Endothelial cell of umbilical vein (primary cell): ENCODE measurements at regions of chr14 and their contacts with region 1.

Region 1: GRCh38 chr14:58082491-58083098 is 69.4 kb downstream of the ARMH4 start:
- DNase-seq: peak; percentile 81
- H3K4me3 ChIP-seq: no peak overlapping the region
- H3K27ac ChIP-seq: peak overlapping the region; percentile 86
- H3K4me1 ChIP-seq: peaks cover 13% of the 10 kb centered on the region
- H3K27me3 ChIP-seq: peaks cover 3 to 13% of the 10 kb centered on the region in 2 experiments
- CTCF ChIP-seq: no peak
- POLR2A ChIP-seq: no peak

Region 2: DNA sequence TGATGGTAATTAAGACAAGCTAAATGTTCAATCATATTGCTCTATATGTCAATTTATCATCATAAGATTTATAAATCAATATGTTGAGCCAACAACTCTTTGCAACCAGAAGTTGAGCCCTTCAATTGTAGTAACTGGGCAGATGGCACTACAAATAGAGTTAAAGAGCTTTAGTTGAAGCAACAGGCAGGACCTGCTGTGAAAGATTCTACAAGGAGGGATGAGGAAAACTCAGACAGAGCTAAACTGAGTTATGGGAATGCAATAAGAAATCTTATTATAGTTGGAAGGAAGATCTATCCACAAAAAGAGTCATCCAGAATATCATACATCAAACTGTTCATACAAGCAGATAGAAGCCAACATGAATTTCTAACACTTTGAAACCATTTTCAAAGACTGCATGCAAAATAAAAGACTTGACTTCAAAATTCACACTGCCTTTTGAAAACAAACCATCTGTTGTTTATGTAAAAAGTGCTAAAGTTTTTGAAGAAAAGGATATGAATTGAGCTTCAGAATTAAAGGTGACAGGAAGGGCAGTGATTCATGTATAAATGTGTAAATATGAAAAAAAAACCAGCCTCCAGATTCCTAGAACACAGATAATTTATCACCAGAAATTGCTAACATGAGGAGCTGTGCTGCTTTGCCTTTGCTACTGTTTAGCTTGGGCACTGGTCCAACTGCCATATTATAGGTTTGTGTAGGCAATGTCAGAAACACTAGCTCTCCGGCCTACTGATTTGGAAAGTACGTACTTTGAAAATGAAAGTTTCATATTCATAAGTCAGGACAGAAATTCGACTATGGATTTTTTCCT is 349.9 kb before region 1 on chr14:
- CTCF ChIA-PET with region 1: no interaction called
- POLR2A ChIA-PET with region 1: no interaction called
- dilution Hi-C with region 1: no loop called
- intact Hi-C with region 1: loop called (anchors 5 kb)
- DNase-seq: peak; percentile 81
- H3K4me3 ChIP-seq: no peak overlapping the region
- H3K27ac ChIP-seq: peak overlapping the region; percentile 12
- H3K4me1 ChIP-seq: peaks cover 20% of the 10 kb centered on the region
- H3K27me3 ChIP-seq: no peaks in the 10 kb centered on the region
- CTCF ChIP-seq: no peak
- POLR2A ChIP-seq: no peak

Region 3: GRCh38 chr14:58098507-58098906 is 15.9 kb after region 1 on chr14:
- CTCF ChIA-PET with region 1: interaction called, 3 read pairs
- POLR2A ChIA-PET with region 1: no interaction called
- dilution Hi-C with region 1: no loop called
- intact Hi-C with region 1: loop called (anchors 2 kb)
- DNase-seq: peak; percentile 22
- H3K4me3 ChIP-seq: no peak overlapping the region
- H3K27ac ChIP-seq: peak overlapping the region; percentile 31
- H3K4me1 ChIP-seq: peaks cover 22% of the 10 kb centered on the region
- H3K27me3 ChIP-seq: peaks cover 0 to 13% of the 10 kb centered on the region in 2 experiments
- CTCF ChIP-seq: no peak
- POLR2A ChIP-seq: no peak